HCT116 (cell line): ENCODE measurements at regions of chr14 and their contacts with region 1.

Region 1: GRCh38 chr14:47917345-47917954 is 242.0 kb upstream of the MDGA2 start:
- DNase-seq: peak; percentile 28
- ATAC-seq: no peak
- H3K4me3 ChIP-seq: no peak overlapping the region
- H3K27ac ChIP-seq: no peak overlapping the region
- H3K4me1 ChIP-seq: no peaks in the 10 kb centered on the region
- H3K27me3 ChIP-seq: no peaks in the 10 kb centered on the region
- CTCF ChIP-seq: peak; percentile 11 to 65 (median 37); a peak in 4 of 6 replicates
- POLR2A ChIP-seq: no peak
- RAD21 ChIP-seq: peak; percentile 53

Region 2: GRCh38 chr14:48398675-48399282 is 481.3 kb after region 1 on chr14:
- CTCF ChIA-PET with region 1: no interaction called
- POLR2A ChIA-PET with region 1: no interaction called
- RAD21 ChIA-PET with region 1: no interaction called
- intact Hi-C with region 1: loop called (anchors 1 kb)
- DNase-seq: peak; percentile 33
- ATAC-seq: peak; percentile 60
- H3K4me3 ChIP-seq: no peak overlapping the region
- H3K27ac ChIP-seq: no peak overlapping the region
- H3K4me1 ChIP-seq: no peaks in the 10 kb centered on the region
- H3K27me3 ChIP-seq: no peaks in the 10 kb centered on the region
- CTCF ChIP-seq: peak; percentile 9 to 68 (median 42); a peak in 3 of 6 replicates
- POLR2A ChIP-seq: no peak
- RAD21 ChIP-seq: peak; percentile 51

Region 3: GRCh38 chr14:49173765-49174373 is 1256.4 kb after region 1 on chr14:
- CTCF ChIA-PET with region 1: interaction called, 5 read pairs
- POLR2A ChIA-PET with region 1: no interaction called
- RAD21 ChIA-PET with region 1: no interaction called
- intact Hi-C with region 1: loop called (anchors 2 kb)
- DNase-seq: peak; percentile 63
- ATAC-seq: peak; percentile 98
- H3K4me3 ChIP-seq: no peak overlapping the region
- H3K27ac ChIP-seq: no peak overlapping the region
- H3K4me1 ChIP-seq: no peaks in the 10 kb centered on the region
- H3K27me3 ChIP-seq: no peaks in the 10 kb centered on the region
- CTCF ChIP-seq: peak; percentile 31 to 70 (median 63); a peak in 5 of 6 replicates
- POLR2A ChIP-seq: no peak
- RAD21 ChIP-seq: peak; percentile 73